GM12878 (cell line): ENCODE measurements at regions of chrX and their contacts with region 1.

Region 1: GRCh38 chrX:11770320-11770719 is 12.3 kb downstream of the MSL3 start:
- DNase-seq: peak; percentile 68
- ATAC-seq: peak; percentile 68
- H3K4me3 ChIP-seq: no peak overlapping the region
- H3K27ac ChIP-seq: peak overlapping the region; percentile 5
- H3K4me1 ChIP-seq: peaks cover 23% of the 10 kb centered on the region
- H3K27me3 ChIP-seq: no peaks in the 10 kb centered on the region
- CTCF ChIP-seq: peak; percentile 86 to 90 (median 90)
- EP300 ChIP-seq: no peak
- POLR2A ChIP-seq: no peak
- RAD21 ChIP-seq: peak; percentile 97

Region 2: DNA sequence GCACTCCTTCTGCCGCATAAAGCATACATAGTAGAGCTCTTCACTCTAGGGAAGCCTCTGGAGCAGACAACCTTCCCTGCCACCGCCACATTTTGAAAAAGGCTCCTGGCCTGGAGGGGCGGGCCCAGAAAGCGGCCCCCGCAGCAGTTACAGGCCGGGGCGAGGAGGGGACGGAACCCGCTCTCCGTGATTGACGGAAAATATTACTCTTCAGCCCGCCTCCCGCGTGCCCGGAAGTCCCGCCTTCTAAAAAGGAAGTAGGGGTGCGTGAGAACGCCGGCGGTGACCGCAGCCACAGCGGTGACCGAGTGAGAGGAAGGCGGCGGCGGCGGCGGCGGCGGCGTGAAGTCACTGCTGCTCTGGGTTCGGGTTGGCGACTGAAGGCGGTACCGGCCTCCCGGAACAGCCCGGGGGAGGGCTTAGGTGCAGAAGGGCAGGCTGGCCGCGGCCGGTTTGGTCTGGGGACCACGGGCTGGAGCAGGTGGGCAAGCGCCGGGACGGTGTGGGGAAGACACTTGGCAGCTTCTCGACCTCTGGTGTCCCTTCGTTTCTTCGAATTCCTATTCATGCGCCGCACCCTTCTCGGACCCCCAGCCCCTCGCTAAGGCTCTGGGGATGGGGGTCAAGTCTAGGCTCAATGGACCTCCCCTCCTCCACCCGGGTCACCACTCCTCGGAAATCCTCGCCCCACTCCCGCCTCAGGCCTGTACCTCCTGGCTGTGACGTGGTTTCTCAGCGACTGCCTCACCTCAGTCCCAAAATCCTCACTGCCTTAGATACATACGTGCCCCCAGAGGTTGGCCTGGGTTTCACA is 659.1 kb before region 1 on chrX and contains the start of gene HCCS:
- CTCF ChIA-PET with region 1: no interaction called
- POLR2A ChIA-PET with region 1: no interaction called
- RAD21 ChIA-PET with region 1: no interaction called
- SMC1A ChIA-PET with region 1: no interaction called
- in situ Hi-C with region 1: no loop called
- intact Hi-C with region 1: no loop called
- DNase-seq: peak; percentile 46
- ATAC-seq: peak; percentile 88
- H3K4me3 ChIP-seq: peak within 1 kb of the TSS; percentile 69
- H3K27ac ChIP-seq: peak within 1 kb of the TSS; percentile 91
- H3K4me1 ChIP-seq: no peaks in the 10 kb centered on the region; the same call in 1 of the 2 replicates
- H3K27me3 ChIP-seq: no peaks in the 10 kb centered on the region
- CTCF ChIP-seq: no peak
- EP300 ChIP-seq: no peak
- POLR2A ChIP-seq: peak; percentile 77
- RAD21 ChIP-seq: no peak
- polyA plus RNA-seq, gene HCCS: 11.8 to 15.6 TPM

Region 3: GRCh38 chrX:11143931-11144678 is 626.2 kb before region 1 on chrX:
- CTCF ChIA-PET with region 1: no interaction called
- POLR2A ChIA-PET with region 1: no interaction called
- RAD21 ChIA-PET with region 1: no interaction called
- SMC1A ChIA-PET with region 1: no interaction called
- in situ Hi-C with region 1: loop called (anchors 10 kb)
- intact Hi-C with region 1: loop called (anchors 2 kb)
- DNase-seq: peak; percentile 42
- ATAC-seq: peak; percentile 99
- H3K4me3 ChIP-seq: no peak overlapping the region
- H3K27ac ChIP-seq: no peak overlapping the region
- H3K4me1 ChIP-seq: no peaks in the 10 kb centered on the region
- H3K27me3 ChIP-seq: no peaks in the 10 kb centered on the region
- CTCF ChIP-seq: peak; percentile 54 to 70 (median 56)
- EP300 ChIP-seq: no peak
- POLR2A ChIP-seq: no peak
- RAD21 ChIP-seq: peak; percentile 85

Region 4: GRCh38 chrX:11540532-11541377 is 229.6 kb before region 1 on chrX:
- CTCF ChIA-PET with region 1: interaction called, 81 read pairs
- POLR2A ChIA-PET with region 1: no interaction called
- RAD21 ChIA-PET with region 1: interaction called, 20 read pairs
- SMC1A ChIA-PET with region 1: interaction called, 105 read pairs
- in situ Hi-C with region 1: no loop called
- intact Hi-C with region 1: no loop called
- DNase-seq: peak; percentile 34
- ATAC-seq: peak; percentile 90
- H3K4me3 ChIP-seq: no peak overlapping the region
- H3K27ac ChIP-seq: no peak overlapping the region
- H3K4me1 ChIP-seq: no peaks in the 10 kb centered on the region
- H3K27me3 ChIP-seq: no peaks in the 10 kb centered on the region
- CTCF ChIP-seq: peak; percentile 9 to 49 (median 25); a peak in 4 of 6 replicates
- EP300 ChIP-seq: peak in 1 of 2 experiments; percentile 48; a peak in 1 of 4 replicates
- POLR2A ChIP-seq: no peak
- RAD21 ChIP-seq: peak; percentile 45

Region 5: DNA sequence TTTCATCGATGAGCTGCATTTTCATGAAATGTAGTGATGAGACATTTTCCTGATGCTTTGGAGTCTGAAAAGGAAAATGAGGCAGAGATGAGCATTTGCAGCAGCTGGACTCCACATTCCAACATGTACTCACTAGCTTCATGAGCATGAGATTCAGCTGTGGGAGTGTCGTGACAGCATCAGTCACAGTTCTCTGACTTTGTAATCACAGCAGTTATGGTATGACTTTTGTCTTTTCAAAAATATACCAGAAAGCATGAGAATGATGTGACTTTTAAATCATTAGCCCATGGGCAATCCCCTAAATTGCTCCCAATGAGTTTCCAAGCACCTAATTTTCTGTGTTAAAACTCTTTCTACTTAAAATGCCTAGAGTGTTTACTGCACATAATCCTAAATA is 30.5 kb before region 1 on chrX:
- CTCF ChIA-PET with region 1: interaction called, 11 read pairs
- POLR2A ChIA-PET with region 1: interaction called, 14 read pairs
- RAD21 ChIA-PET with region 1: interaction called, 76 read pairs
- SMC1A ChIA-PET with region 1: interaction called, 23 read pairs
- in situ Hi-C with region 1: no loop called
- intact Hi-C with region 1: loop called (anchors 2 kb)
- DNase-seq: peak; percentile 66
- ATAC-seq: peak; percentile 64
- H3K4me3 ChIP-seq: no peak overlapping the region
- H3K27ac ChIP-seq: peak overlapping the region; percentile 73
- H3K4me1 ChIP-seq: peaks cover 17% of the 10 kb centered on the region; the same call in 1 of the 2 replicates
- H3K27me3 ChIP-seq: no peaks in the 10 kb centered on the region
- CTCF ChIP-seq: no peak
- EP300 ChIP-seq: peak; percentile 85 to 92
- POLR2A ChIP-seq: no peak
- RAD21 ChIP-seq: no peak

Region 6: DNA sequence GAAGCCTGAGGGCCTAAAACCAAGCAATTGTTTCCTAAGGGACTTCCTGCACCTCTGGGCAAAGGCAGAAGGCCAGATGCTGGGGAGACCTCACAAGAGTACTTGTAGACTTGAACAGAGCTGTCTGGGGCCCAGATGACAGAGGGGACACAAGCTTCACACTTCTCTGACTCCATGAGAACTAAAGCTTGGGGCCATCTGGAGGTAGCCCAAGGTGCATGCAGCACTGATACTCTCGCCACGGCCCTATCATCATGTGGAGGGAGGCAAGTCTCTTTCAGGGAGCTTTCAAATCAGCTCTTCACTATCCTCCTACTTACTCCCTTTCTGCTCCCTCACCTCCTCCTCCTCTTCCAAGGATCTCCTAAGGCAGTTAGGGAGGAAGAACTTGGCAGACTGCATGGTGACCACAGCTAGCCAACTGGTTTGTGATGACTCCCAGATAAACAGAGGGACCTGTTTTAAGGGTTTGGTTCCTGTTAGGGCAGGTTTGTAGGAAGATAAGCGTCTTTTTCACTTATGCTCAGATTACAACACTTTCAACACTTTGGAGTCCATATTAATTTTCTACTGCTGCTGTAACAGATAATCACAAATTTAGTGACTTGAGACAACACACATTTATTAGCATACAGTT is 11.5 kb after region 1 on chrX:
- CTCF ChIA-PET with region 1: interaction called, 226 read pairs
- POLR2A ChIA-PET with region 1: interaction called, 207 read pairs
- RAD21 ChIA-PET with region 1: interaction called, 428 read pairs
- SMC1A ChIA-PET with region 1: interaction called, 404 read pairs
- in situ Hi-C with region 1: no loop called
- intact Hi-C with region 1: no loop called
- DNase-seq: no peak
- ATAC-seq: peak; percentile 42
- H3K4me3 ChIP-seq: no peak overlapping the region
- H3K27ac ChIP-seq: no peak overlapping the region
- H3K4me1 ChIP-seq: no peaks in the 10 kb centered on the region
- H3K27me3 ChIP-seq: no peaks in the 10 kb centered on the region
- CTCF ChIP-seq: no peak
- EP300 ChIP-seq: no peak
- POLR2A ChIP-seq: no peak
- RAD21 ChIP-seq: no peak

Region 7: DNA sequence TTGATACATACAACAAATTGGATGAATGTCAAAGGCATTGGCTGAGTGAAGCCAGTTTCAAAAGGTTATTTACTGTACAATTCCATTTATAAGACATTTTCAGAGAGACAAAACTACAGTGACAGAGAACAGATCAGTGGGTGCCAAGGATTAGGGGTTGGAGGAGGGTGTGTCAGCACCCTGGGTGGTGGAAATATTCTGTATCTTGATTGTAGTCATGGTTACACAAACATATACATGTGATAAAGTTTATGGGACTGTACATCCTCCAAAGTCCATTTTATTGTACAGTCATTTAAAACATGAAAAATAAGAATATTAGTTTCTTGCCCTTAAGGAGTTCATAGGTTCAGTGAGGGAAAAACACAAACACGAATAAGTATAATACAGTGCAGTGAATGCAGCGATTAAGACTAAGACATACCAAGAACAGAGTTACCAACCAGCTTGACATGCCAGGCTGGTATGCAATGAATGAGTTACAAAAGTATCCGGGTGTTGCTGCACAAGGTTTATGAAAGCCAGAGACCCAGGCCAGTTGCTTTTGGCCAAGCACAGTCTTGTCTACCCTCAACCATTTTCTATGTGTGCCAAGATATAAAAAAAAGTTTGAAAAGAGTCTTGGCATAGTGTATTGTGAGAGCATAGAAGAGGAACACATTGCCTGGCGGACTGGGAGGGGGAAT is 111.3 kb after region 1 on chrX:
- CTCF ChIA-PET with region 1: no interaction called
- POLR2A ChIA-PET with region 1: no interaction called
- RAD21 ChIA-PET with region 1: no interaction called
- SMC1A ChIA-PET with region 1: no interaction called
- in situ Hi-C with region 1: no loop called
- intact Hi-C with region 1: no loop called
- DNase-seq: no peak
- ATAC-seq: no peak
- H3K4me3 ChIP-seq: no peak overlapping the region
- H3K27ac ChIP-seq: no peak overlapping the region
- H3K4me1 ChIP-seq: no peaks in the 10 kb centered on the region
- H3K27me3 ChIP-seq: no peaks in the 10 kb centered on the region
- CTCF ChIP-seq: no peak
- EP300 ChIP-seq: no peak
- POLR2A ChIP-seq: no peak
- RAD21 ChIP-seq: no peak

Region 8: DNA sequence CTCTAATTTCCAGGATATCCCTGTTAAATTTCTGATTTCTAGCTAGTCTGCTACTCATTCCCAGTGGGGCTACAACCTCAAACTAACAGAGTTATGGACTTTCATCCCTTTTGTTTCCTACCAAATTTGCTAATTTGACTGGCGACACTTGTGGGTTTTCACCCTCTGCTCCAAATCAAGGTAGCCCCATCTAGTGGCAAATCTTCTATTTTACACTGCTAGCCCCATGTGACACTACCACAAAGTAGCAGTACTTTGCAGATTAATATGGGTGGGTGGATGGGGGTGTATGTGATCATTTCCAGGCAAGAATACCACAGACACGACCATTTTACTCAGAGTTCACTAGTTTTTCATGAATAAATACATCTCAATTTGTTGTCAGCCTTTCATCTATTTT is 138.1 kb after region 1 on chrX:
- CTCF ChIA-PET with region 1: interaction called, 8 read pairs
- POLR2A ChIA-PET with region 1: interaction called, 3 read pairs
- RAD21 ChIA-PET with region 1: interaction called, 6 read pairs
- SMC1A ChIA-PET with region 1: interaction called, 16 read pairs
- in situ Hi-C with region 1: no loop called
- intact Hi-C with region 1: loop called (anchors 2 kb)
- DNase-seq: peak; percentile 25
- ATAC-seq: peak; percentile 99
- H3K4me3 ChIP-seq: no peak overlapping the region
- H3K27ac ChIP-seq: no peak overlapping the region
- H3K4me1 ChIP-seq: no peaks in the 10 kb centered on the region
- H3K27me3 ChIP-seq: no peaks in the 10 kb centered on the region
- CTCF ChIP-seq: peak; percentile 54 to 70 (median 56)
- EP300 ChIP-seq: no peak
- POLR2A ChIP-seq: no peak
- RAD21 ChIP-seq: peak; percentile 71

Region 9: DNA sequence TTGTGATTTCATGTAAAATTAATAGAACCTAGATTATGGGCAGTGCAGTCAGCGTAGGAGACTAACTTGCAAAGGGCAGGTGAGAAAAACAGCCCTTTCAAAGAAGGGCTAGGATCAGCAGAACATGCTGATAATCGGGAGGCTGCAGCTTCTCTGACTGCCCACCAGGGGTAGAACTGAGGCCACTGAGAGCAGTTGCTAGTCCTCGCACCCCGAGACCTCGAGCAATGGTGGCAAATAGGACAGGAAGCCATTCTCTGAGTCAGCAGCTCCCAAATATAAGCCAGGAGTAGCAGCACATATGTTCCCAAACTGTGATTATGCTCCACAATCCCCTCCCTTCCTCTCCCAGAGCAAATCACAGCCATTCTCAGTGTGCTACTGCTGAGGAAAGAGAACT is 174.2 kb after region 1 on chrX:
- CTCF ChIA-PET with region 1: no interaction called
- POLR2A ChIA-PET with region 1: no interaction called
- RAD21 ChIA-PET with region 1: no interaction called
- SMC1A ChIA-PET with region 1: no interaction called
- in situ Hi-C with region 1: no loop called
- intact Hi-C with region 1: no loop called
- DNase-seq: no peak
- ATAC-seq: peak; percentile 91
- H3K4me3 ChIP-seq: no peak overlapping the region
- H3K27ac ChIP-seq: no peak overlapping the region
- H3K4me1 ChIP-seq: no peaks in the 10 kb centered on the region
- H3K27me3 ChIP-seq: no peaks in the 10 kb centered on the region; a peak in 1 of 4 replicates
- CTCF ChIP-seq: peak; percentile 29 to 56 (median 32); a peak in 4 of 6 replicates
- EP300 ChIP-seq: no peak
- POLR2A ChIP-seq: no peak
- RAD21 ChIP-seq: peak; percentile 32

Region 10: GRCh38 chrX:12162420-12162819 is 392.1 kb after region 1 on chrX:
- CTCF ChIA-PET with region 1: no interaction called
- POLR2A ChIA-PET with region 1: no interaction called
- RAD21 ChIA-PET with region 1: no interaction called
- SMC1A ChIA-PET with region 1: no interaction called
- in situ Hi-C with region 1: no loop called
- intact Hi-C with region 1: no loop called
- DNase-seq: no peak
- ATAC-seq: no peak
- H3K4me3 ChIP-seq: no peak overlapping the region
- H3K27ac ChIP-seq: no peak overlapping the region
- H3K4me1 ChIP-seq: no peaks in the 10 kb centered on the region
- H3K27me3 ChIP-seq: no peaks in the 10 kb centered on the region; a peak in 1 of 4 replicates
- CTCF ChIP-seq: no peak
- EP300 ChIP-seq: no peak
- POLR2A ChIP-seq: no peak
- RAD21 ChIP-seq: no peak